CD14-positive monocyte (primary cell): ENCODE measurements at regions of chrX and their contacts with region 1.

Region 1: GRCh38 chrX:10244915-10245622 is 88.3 kb downstream of the CLCN4 start:
- DNase-seq: no peak
- H3K4me3 ChIP-seq: no peak overlapping the region
- H3K4me3 Mint-ChIP-seq: no peak overlapping the region
- H3K27ac ChIP-seq: no peak overlapping the region
- H3K27ac Mint-ChIP-seq: no peak overlapping the region
- H3K4me1 ChIP-seq: no peaks in the 10 kb centered on the region
- H3K4me1 Mint-ChIP-seq: no peaks in the 10 kb centered on the region
- H3K27me3 ChIP-seq: no peaks in the 10 kb centered on the region
- H3K27me3 Mint-ChIP-seq: peaks cover 0 to 7% (median 0%) of the 10 kb centered on the region in 3 donors
- CTCF ChIP-seq: no peak

Region 2: DNA sequence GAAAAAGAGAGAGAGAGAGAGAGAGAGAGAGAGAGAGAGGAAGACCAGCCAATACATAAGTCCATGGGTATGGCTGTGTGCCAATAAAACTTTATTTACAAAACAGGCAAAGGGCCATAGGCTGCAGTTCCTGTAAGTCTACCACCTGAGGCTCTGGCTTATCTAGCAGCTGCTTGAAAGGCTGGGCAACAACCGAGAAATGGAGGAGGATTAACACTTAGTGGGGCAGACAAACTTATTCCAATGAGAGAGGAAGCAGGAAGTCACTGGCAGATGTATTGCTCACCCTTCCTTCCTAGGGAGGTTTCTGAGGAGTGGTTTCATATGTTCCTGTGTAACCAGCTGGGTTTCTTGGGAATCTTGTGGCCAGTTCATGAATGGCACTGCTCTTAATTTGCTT is 474.8 kb before region 1 on chrX:
- intact Hi-C with region 1: no loop called
- DNase-seq: no peak
- H3K4me3 ChIP-seq: no peak overlapping the region
- H3K4me3 Mint-ChIP-seq: no peak overlapping the region
- H3K27ac ChIP-seq: no peak overlapping the region
- H3K27ac Mint-ChIP-seq: no peak overlapping the region
- H3K4me1 ChIP-seq: no peaks in the 10 kb centered on the region
- H3K4me1 Mint-ChIP-seq: peaks cover under 1% of the 10 kb centered on the region
- H3K27me3 ChIP-seq: peaks cover 22 to 50% of the 10 kb centered on the region in 2 donors
- H3K27me3 Mint-ChIP-seq: peaks cover 47 to 82% (median 67%) of the 10 kb centered on the region in 3 donors
- CTCF ChIP-seq: no peak

Region 3: DNA sequence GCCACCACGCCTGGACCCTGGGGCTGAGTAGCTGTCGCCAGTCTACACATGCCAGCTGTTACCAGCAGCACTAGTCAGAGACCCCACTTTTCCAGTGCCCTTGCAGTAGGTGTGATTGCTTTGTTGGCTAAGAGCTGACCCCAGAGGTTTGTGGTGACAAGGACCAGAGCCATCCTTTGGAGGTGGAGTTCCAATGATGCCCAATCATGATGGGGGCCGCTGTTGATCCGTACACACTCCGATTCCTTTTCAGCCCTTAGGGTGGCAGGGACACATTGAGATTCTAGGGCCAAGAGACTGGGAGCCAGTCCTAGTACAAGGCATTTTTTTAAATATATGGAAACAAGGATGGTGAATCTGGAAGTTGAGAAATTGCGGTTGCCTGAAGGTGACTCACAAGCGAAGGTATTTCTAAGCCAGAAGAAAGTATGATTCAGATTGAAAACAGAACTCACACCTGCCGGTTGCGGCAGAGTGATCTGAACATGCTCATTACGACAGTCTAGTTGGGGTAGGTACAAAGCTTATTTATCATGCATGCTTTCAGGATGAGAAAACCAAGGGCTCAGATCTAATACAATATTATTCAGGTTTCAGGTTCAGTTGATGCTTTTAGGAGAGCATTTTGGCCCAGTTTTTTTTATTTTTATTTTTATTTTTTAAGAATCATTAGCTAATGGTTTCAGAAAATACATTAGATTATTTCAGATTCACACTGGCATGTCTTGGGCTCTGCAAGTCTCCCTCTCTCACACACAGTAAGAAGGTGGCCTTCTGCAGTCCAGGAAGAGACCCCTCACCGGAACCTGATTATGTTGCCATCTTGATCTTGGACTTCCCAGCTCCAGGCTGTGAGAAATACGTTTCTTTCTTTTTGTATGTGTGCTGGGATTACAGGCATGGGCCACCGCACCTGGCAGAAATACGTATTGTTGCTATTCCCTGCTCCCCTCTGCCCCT is 415.5 kb before region 1 on chrX:
- intact Hi-C with region 1: loop called in 1 of 2 experiments (anchors 5 kb)
- DNase-seq: no peak
- H3K4me3 ChIP-seq: no peak overlapping the region
- H3K4me3 Mint-ChIP-seq: no peak overlapping the region
- H3K27ac ChIP-seq: no peak overlapping the region
- H3K27ac Mint-ChIP-seq: no peak overlapping the region
- H3K4me1 ChIP-seq: peaks cover 9 to 10% of the 10 kb centered on the region in 2 donors
- H3K4me1 Mint-ChIP-seq: peaks cover 11% of the 10 kb centered on the region
- H3K27me3 ChIP-seq: no peaks in the 10 kb centered on the region
- H3K27me3 Mint-ChIP-seq: peaks cover 13 to 23% (median 16%) of the 10 kb centered on the region in 3 donors
- CTCF ChIP-seq: no peak